Common myeloid progenitor, CD34-positive (primary cell): ENCODE measurements at regions of chr17 and their contacts with region 1.

Region 1: DNA sequence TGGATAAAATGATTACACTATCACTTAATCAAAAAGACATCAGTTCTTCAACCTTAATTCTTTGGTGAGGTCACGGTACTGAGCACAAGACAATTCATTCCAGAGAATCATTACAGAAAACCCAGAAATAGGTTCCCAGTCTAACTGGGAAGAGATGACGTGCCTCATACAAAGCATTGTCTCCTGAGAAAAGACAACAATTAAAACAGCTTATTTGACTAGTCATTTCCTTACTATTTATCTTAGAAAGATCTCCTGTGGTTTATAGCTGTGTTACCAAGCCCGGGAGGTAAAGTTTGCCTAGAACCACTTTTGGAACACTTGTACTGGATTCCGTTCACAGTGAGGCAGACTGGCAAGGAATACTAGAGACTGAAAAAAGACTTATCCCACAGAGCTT is 5.1 kb downstream of the PHF12 start:
- DNase-seq: peak in 2 of 3 donors; percentile 42 to 43
- H3K4me3 ChIP-seq: peak overlapping the region in 4 of 7 experiments; percentile 8 to 49 (median 38)
- H3K27ac ChIP-seq: peak overlapping the region; percentile 43 to 70
- H3K4me1 ChIP-seq: peaks cover 21 to 43% (median 34%) of the 10 kb centered on the region in 4 experiments
- H3K27me3 ChIP-seq: no peaks in the 10 kb centered on the region

Region 2: GRCh38 chr17:28885363-28885762 is 60.9 kb before region 1 on chr17:
- CTCF ChIA-PET with region 1: no interaction called
- POLR2A ChIA-PET with region 1: no interaction called
- DNase-seq: no peak
- H3K4me3 ChIP-seq: no peak overlapping the region
- H3K27ac ChIP-seq: peak overlapping the region in 1 of 2 experiments; percentile 16
- H3K4me1 ChIP-seq: peaks cover 0 to 6% (median 3%) of the 10 kb centered on the region in 4 experiments
- H3K27me3 ChIP-seq: no peaks in the 10 kb centered on the region

Region 3: GRCh38 chr17:28916302-28916934 is 29.8 kb before region 1 on chr17:
- CTCF ChIA-PET with region 1: interaction called, 15 read pairs
- POLR2A ChIA-PET with region 1: no interaction called
- DNase-seq: peak; percentile 45 to 63 (median 59)
- H3K4me3 ChIP-seq: no peak overlapping the region
- H3K27ac ChIP-seq: no peak overlapping the region
- H3K4me1 ChIP-seq: no peaks in the 10 kb centered on the region
- H3K27me3 ChIP-seq: no peaks in the 10 kb centered on the region

Region 4: GRCh38 chr17:28925912-28926365 is 20.3 kb before region 1 on chr17:
- CTCF ChIA-PET with region 1: interaction called, 128 read pairs
- POLR2A ChIA-PET with region 1: interaction called, 23 read pairs
- DNase-seq: peak; percentile 95 to 98 (median 96)
- H3K4me3 ChIP-seq: peak overlapping the region in 6 of 7 experiments; percentile 25 to 75 (median 45)
- H3K27ac ChIP-seq: peak overlapping the region; percentile 95 to 96
- H3K4me1 ChIP-seq: peaks cover 26 to 47% (median 34%) of the 10 kb centered on the region in 4 experiments
- H3K27me3 ChIP-seq: no peaks in the 10 kb centered on the region

Region 5: GRCh38 chr17:28973425-28973824 is 27.2 kb after region 1 on chr17:
- CTCF ChIA-PET with region 1: no interaction called
- POLR2A ChIA-PET with region 1: no interaction called
- DNase-seq: no peak
- H3K4me3 ChIP-seq: no peak overlapping the region
- H3K27ac ChIP-seq: no peak overlapping the region
- H3K4me1 ChIP-seq: no peaks in the 10 kb centered on the region
- H3K27me3 ChIP-seq: peaks cover 0 to 7% (median 0%) of the 10 kb centered on the region in 5 experiments

Region 6: GRCh38 chr17:29155227-29155965 is 209.2 kb after region 1 on chr17:
- CTCF ChIA-PET with region 1: no interaction called
- POLR2A ChIA-PET with region 1: no interaction called
- DNase-seq: peak in 2 of 3 donors; percentile 48 to 57
- H3K4me3 ChIP-seq: no peak overlapping the region
- H3K27ac ChIP-seq: no peak overlapping the region
- H3K4me1 ChIP-seq: peaks cover 4 to 45% (median 26%) of the 10 kb centered on the region in 4 experiments
- H3K27me3 ChIP-seq: no peaks in the 10 kb centered on the region